A673 (cell line): ENCODE measurements at regions of chr12 and their contacts with region 1.

Region 1: DNA sequence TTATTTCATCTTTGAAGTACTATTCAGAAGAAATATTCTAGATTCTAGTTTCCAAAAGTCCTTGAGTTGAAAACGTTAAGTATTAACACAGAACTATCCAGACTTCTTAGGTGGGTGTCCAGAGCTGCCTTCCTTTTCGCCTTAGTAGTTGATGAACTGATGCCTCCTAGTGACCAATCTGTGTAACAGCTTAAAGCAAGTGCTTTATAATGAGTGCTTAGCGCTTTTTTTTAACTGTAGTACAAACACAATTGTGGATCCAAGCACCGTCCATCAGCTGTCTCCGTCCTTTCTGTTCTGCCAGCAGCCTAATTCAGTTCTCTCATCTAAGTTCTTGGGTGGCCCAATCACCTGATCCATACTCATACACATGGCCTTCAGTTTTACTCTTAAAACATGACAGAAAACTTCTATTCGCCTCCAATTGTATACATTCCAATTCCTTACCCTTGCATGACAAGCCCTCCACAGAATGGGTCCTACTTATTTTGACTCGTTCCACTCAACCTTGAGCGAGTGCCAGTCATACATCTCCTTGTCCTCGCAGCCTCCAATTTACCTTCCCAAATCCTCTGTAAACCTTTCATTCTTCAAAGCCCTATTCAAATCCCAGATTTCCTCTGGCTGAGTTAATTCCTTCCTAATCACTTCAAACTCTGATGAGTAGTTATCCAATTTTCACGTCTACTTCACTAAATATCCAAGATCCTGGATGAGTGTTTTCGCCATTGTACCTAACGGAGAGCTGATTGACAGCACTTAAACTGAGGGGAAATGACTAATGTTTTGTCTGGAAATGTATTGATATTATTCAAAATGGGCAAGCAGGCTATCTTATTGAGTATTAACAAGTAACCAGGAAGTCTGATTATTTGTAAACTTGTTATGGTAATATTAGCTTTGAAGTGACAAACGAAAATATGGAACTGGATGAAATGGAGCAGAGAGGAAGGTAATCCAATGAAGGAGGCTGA is 5.8 kb upstream of the PHLDA1 start:
- DNase-seq: peak; percentile 88
- H3K4me3 ChIP-seq: peak overlapping the region; percentile 15
- H3K27ac ChIP-seq: no peak overlapping the region
- H3K4me1 ChIP-seq: peaks cover 21% of the 10 kb centered on the region
- H3K27me3 ChIP-seq: no peaks in the 10 kb centered on the region
- CTCF ChIP-seq: peak; percentile 89

Region 2: DNA sequence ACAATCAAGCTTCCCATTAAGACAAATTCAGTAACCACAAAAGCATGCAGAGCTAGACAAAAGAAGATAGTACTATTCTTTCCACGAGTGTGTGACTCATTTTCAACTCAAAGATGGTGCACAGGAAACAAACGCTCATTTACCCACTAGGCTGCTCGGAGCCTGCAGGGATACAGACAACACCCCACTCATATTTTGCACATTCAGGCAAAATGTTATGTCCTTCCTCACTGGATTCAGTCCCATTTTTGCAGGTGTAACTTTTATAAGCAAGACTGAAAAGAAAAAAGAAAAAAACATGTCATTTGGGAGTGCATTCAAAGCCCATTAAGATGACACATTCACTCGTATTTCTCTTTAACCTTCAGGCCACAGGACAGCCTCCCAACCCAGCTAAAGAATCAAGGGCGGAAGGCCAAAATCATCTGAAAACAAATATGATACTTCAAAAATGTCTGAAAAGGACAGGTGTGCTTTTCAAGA is 378.5 kb before region 1 on chr12:
- CTCF ChIA-PET with region 1: no interaction called
- POLR2A ChIA-PET with region 1: interaction called, 12 read pairs
- intact Hi-C with region 1: no loop called
- DNase-seq: peak; percentile 73
- H3K4me3 ChIP-seq: no peak overlapping the region
- H3K27ac ChIP-seq: no peak overlapping the region
- H3K4me1 ChIP-seq: peaks cover 15% of the 10 kb centered on the region
- H3K27me3 ChIP-seq: no peaks in the 10 kb centered on the region
- CTCF ChIP-seq: no peak

Region 3: GRCh38 chr12:76083904-76084862 is 46.8 kb after region 1 on chr12 and contains the start of gene NAP1L1:
- CTCF ChIA-PET with region 1: no interaction called
- POLR2A ChIA-PET with region 1: no interaction called
- intact Hi-C with region 1: no loop called
- DNase-seq: peak; percentile 99
- H3K4me3 ChIP-seq: peak within 1 kb of the TSS; percentile 95
- H3K27ac ChIP-seq: peak within 1 kb of the TSS; percentile 98
- H3K4me1 ChIP-seq: peaks cover 23% of the 10 kb centered on the region
- H3K27me3 ChIP-seq: no peaks in the 10 kb centered on the region
- CTCF ChIP-seq: no peak
- total RNA-seq, gene NAP1L1: 801 and 837 TPM in 2 replicates

Region 4: DNA sequence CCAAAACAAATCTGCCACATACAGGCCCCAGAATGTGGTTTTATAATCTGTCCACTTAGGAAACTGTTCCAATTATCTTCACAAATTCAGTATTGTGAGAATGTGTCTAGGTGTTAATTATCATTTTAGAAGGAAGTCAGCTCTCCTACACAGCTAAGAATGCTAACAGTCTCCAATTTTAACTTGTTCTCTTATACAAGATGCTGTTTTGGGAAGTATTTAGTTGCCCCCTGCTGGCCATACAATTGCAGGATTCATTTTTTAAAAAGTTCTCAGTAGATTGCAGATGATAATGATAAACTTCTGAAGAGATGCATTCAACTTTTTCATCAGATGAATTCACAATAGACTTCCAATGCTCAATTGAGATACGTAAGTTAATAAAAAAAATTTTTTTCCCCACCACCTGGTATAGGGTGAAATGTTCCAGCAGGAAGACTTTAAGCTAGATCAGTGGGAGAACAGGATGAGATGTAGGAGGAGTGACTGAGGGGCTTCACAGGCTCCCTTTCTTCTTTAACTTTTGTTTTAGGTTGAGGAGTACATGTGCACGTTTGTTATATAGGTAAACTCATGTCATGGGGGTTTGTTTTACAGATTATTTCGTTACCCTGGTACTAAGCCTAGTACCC is 549.5 kb after region 1 on chr12:
- CTCF ChIA-PET with region 1: no interaction called
- POLR2A ChIA-PET with region 1: no interaction called
- intact Hi-C with region 1: loop called (anchors 10 kb)
- DNase-seq: peak; percentile 73
- H3K4me3 ChIP-seq: no peak overlapping the region
- H3K27ac ChIP-seq: no peak overlapping the region
- H3K4me1 ChIP-seq: peaks cover 4% of the 10 kb centered on the region
- H3K27me3 ChIP-seq: no peaks in the 10 kb centered on the region
- CTCF ChIP-seq: peak; percentile 76